B cell (primary cell): ENCODE measurements at regions of chr5 and their contacts with region 1.

Region 1: GRCh38 chr5:134041570-134042411 is 37.0 kb upstream of the VDAC1 start:
- DNase-seq: no peak
- ATAC-seq: no peak
- H3K4me3 ChIP-seq: no peak overlapping the region
- H3K4me3 Mint-ChIP-seq: no peak overlapping the region
- H3K27ac ChIP-seq: no peak overlapping the region
- H3K27ac Mint-ChIP-seq: no peak overlapping the region
- H3K4me1 ChIP-seq: peaks cover 0 to 3% of the 10 kb centered on the region in 2 donors
- H3K4me1 Mint-ChIP-seq: peaks cover 1% of the 10 kb centered on the region
- H3K27me3 ChIP-seq: no peaks in the 10 kb centered on the region
- H3K27me3 Mint-ChIP-seq: no peaks in the 10 kb centered on the region
- CTCF ChIP-seq: no peak

Region 2: DNA sequence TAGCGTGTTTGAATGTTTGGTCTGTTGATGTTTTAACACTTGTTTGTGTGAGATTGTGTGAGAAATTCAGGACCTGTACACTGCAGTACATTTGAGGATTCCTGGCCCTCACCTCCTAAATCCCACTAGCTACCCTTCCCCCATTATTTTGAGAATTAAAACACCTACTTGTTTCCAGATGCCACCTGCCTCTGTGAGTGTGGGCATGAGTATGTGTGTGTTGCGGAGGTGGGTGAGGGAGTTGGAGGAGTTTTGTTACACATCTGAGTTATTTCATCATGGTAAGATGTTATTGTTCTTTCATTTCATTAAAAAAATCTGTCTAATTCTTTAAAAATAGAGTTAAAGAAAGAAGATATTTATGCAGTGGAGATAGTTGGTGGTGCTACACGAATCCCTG is 953.7 kb before region 1 on chr5:
- CTCF ChIA-PET with region 1: no interaction called
- POLR2A ChIA-PET with region 1: no interaction called
- intact Hi-C with region 1: no loop called
- DNase-seq: no peak
- ATAC-seq: no peak
- H3K4me3 ChIP-seq: no peak overlapping the region
- H3K4me3 Mint-ChIP-seq: no peak overlapping the region
- H3K27ac ChIP-seq: no peak overlapping the region
- H3K27ac Mint-ChIP-seq: peak overlapping the region; percentile 41
- H3K4me1 ChIP-seq: no peaks in the 10 kb centered on the region
- H3K4me1 Mint-ChIP-seq: peaks cover 3% of the 10 kb centered on the region
- H3K27me3 ChIP-seq: no peaks in the 10 kb centered on the region
- H3K27me3 Mint-ChIP-seq: no peaks in the 10 kb centered on the region
- CTCF ChIP-seq: no peak

Region 3: DNA sequence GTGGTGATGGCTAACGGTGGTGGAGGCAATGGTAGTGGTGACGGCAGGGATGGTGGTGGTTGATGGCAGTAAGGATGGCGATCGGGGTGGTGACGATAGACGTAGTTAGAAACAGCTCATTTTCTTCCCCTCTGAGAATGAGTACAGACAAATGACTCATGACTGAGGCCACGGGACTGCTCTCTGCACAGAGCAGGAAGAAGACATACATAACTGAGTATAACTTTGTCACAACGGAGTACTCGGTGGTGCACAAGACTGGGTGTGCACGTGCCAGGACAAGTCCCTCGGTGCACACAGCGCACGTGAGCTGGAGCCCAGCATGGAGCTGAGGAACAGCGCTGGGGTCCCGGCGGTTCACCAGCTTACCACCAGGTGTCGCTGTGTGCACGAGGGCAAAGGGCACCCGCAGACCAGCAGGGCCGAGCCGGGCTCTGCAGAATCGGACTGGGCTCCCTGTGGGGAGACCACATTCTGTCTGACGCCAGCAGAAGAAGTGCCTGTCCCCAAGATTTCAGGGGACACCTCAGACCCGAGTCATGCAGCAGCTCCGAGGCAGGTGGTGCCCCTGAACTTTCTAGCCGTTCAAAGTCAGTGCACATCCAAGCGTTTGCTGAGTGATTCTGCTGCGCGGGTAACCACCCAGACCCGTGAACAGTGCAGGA is 618.0 kb before region 1 on chr5:
- CTCF ChIA-PET with region 1: interaction called, 11 read pairs
- POLR2A ChIA-PET with region 1: no interaction called
- intact Hi-C with region 1: no loop called
- DNase-seq: peak; percentile 80
- ATAC-seq: peak; percentile 79
- H3K4me3 ChIP-seq: no peak overlapping the region
- H3K4me3 Mint-ChIP-seq: no peak overlapping the region
- H3K27ac ChIP-seq: no peak overlapping the region
- H3K27ac Mint-ChIP-seq: no peak overlapping the region
- H3K4me1 ChIP-seq: peaks cover 0 to 13% of the 10 kb centered on the region in 2 donors
- H3K4me1 Mint-ChIP-seq: peaks cover 7% of the 10 kb centered on the region
- H3K27me3 ChIP-seq: no peaks in the 10 kb centered on the region
- H3K27me3 Mint-ChIP-seq: peaks cover 28% of the 10 kb centered on the region
- CTCF ChIP-seq: peak; percentile 98

Region 4: DNA sequence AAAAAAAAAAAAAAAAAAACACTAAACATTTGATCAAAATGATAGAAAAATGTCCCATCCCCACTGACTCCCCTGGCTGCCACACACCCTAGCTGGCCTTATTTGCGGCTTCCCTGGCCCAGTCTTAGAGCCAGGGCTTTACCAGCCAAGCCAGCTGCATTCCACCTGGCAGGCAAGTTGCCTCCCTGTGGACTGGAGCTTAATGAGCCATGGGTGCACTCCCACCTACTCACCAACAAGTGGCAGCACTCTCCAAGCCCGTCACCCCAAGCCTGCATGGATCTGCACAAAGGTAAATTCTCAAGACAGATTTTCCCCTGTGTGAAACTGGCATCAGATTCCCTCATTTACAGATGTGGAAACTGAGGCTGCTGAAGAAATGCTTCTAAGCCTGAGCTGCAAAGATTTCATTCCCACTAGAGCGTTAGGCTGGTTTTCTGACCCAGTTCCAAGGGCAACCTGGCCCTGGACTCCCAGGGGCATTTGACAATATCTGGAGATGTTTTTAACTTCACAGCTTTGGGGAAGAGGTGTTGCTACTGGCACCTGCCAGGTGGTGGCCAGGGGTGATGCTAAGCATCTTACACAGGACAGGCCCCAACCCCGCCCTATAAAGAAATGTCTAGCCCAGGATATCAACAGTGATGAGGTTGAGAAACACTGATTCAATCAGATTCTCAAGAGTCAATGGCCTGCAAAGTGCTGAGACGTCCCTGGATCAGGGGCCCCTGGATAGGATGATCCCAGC is 15.1 kb before region 1 on chr5:
- CTCF ChIA-PET with region 1: interaction called, 18 read pairs
- POLR2A ChIA-PET with region 1: no interaction called
- intact Hi-C with region 1: no loop called
- DNase-seq: peak; percentile 45
- ATAC-seq: peak; percentile 75
- H3K4me3 ChIP-seq: no peak overlapping the region
- H3K4me3 Mint-ChIP-seq: no peak overlapping the region
- H3K27ac ChIP-seq: no peak overlapping the region
- H3K27ac Mint-ChIP-seq: no peak overlapping the region
- H3K4me1 ChIP-seq: peaks cover 6 to 8% of the 10 kb centered on the region in 2 donors
- H3K4me1 Mint-ChIP-seq: peaks cover 12% of the 10 kb centered on the region
- H3K27me3 ChIP-seq: no peaks in the 10 kb centered on the region
- H3K27me3 Mint-ChIP-seq: peaks cover 3% of the 10 kb centered on the region
- CTCF ChIP-seq: peak; percentile 47

Region 5: DNA sequence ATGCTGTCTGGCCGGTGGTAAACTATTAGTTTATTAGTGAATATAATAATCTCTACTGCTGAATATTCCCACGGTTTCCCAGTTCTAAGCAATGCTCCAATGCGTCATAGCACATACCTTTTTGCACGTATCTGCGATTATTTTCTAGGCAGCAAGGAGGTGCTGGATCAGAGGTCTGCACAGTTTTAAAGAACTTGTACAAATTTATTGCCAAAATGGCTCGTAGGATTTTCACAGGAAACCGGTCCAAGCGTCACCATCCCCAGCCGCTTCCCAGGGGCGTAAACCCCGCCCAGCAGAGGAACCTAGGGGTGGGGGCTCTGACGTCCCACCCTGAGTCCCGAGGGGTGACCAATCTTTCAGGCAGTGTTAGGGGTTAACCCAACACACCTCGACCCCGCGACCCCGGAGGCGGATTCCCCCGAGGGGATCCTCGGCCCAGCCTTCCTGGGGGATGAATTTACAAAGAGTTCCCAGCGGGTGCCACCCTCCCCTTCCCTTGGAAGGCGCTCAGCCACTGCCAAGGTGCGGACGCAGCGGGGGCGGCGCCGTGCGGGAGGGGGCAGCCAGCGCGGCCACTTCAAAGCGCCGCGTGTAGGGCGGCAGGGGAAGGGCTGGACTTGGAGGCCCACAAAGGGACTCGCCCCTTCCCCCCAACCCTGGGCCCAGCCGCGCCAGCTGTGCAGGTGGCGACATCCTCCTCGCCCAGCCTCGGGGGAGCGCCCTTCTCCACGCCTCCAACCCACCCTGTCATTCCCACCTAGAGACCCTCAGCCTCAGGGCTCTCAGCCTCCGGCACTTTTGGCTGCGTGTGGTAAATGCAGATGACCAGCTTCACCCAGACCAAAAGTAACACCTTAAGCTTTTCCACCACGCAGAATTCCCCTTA is 29.2 kb after region 1 on chr5:
- CTCF ChIA-PET with region 1: interaction called, 12 read pairs
- POLR2A ChIA-PET with region 1: no interaction called
- intact Hi-C with region 1: no loop called
- DNase-seq: peak; percentile 36
- ATAC-seq: peak; percentile 33
- H3K4me3 ChIP-seq: peak overlapping the region in 4 of 5 experiments; percentile 26 to 56 (median 38)
- H3K4me3 Mint-ChIP-seq: peak overlapping the region; percentile 81
- H3K27ac ChIP-seq: no peak overlapping the region
- H3K27ac Mint-ChIP-seq: peak overlapping the region; percentile 60
- H3K4me1 ChIP-seq: peaks cover 12 to 13% of the 10 kb centered on the region in 2 donors
- H3K4me1 Mint-ChIP-seq: peaks cover 5% of the 10 kb centered on the region
- H3K27me3 ChIP-seq: peaks cover 0 to 31% (median 12%) of the 10 kb centered on the region in 4 experiments
- H3K27me3 Mint-ChIP-seq: peaks cover 32% of the 10 kb centered on the region
- CTCF ChIP-seq: no peak

Region 6: GRCh38 chr5:134125039-134126015 is 83.5 kb after region 1 on chr5:
- CTCF ChIA-PET with region 1: interaction called, 644 read pairs
- POLR2A ChIA-PET with region 1: no interaction called
- intact Hi-C with region 1: no loop called
- DNase-seq: no peak
- ATAC-seq: no peak
- H3K4me3 ChIP-seq: no peak overlapping the region
- H3K4me3 Mint-ChIP-seq: no peak overlapping the region
- H3K27ac ChIP-seq: peak overlapping the region; percentile 28 to 55
- H3K27ac Mint-ChIP-seq: peak overlapping the region; percentile 59
- H3K4me1 ChIP-seq: peaks cover 33 to 72% of the 10 kb centered on the region in 2 donors
- H3K4me1 Mint-ChIP-seq: peaks cover 54% of the 10 kb centered on the region
- H3K27me3 ChIP-seq: no peaks in the 10 kb centered on the region
- H3K27me3 Mint-ChIP-seq: no peaks in the 10 kb centered on the region
- CTCF ChIP-seq: no peak

Region 7: GRCh38 chr5:134161513-134162395 is 120.0 kb after region 1 on chr5:
- CTCF ChIA-PET with region 1: interaction called, 13 read pairs
- POLR2A ChIA-PET with region 1: no interaction called
- intact Hi-C with region 1: no loop called
- DNase-seq: no peak
- ATAC-seq: no peak
- H3K4me3 ChIP-seq: no peak overlapping the region
- H3K4me3 Mint-ChIP-seq: no peak overlapping the region
- H3K27ac ChIP-seq: no peak overlapping the region
- H3K27ac Mint-ChIP-seq: no peak overlapping the region
- H3K4me1 ChIP-seq: no peaks in the 10 kb centered on the region
- H3K4me1 Mint-ChIP-seq: no peaks in the 10 kb centered on the region
- H3K27me3 ChIP-seq: no peaks in the 10 kb centered on the region
- H3K27me3 Mint-ChIP-seq: no peaks in the 10 kb centered on the region
- CTCF ChIP-seq: no peak

Region 8: DNA sequence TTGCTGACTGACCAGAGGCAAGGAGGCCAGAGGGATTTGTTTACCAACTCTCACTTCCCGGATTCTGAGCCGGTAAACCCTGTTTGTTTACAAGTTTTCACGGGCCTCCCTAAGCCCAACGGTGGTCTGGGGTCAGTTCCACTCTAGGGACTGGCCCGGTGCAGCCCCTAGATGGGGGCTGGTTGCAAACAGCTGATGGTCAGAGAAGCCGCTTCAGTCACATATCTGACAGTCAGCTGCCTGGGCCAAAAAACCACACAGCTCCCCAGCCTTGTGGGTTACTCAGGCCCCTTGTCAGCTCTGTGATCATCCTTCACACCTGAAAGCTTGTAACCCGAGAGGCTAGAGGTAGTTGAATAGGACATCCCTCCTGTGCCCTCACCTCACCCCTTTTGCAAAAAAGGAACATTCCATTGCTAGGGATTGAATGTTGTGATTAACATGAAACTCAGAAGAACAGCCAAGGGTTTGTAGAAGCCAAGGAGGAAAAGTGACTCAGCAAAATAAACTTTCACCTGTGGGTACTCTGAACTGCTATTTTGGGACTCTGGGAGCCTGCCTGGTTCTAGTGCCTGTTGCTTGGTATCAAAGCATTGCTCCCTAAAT is 550.5 kb after region 1 on chr5:
- CTCF ChIA-PET with region 1: no interaction called
- POLR2A ChIA-PET with region 1: no interaction called
- intact Hi-C with region 1: no loop called
- DNase-seq: no peak
- ATAC-seq: no peak
- H3K4me3 ChIP-seq: no peak overlapping the region
- H3K4me3 Mint-ChIP-seq: no peak overlapping the region
- H3K27ac ChIP-seq: no peak overlapping the region
- H3K27ac Mint-ChIP-seq: no peak overlapping the region
- H3K4me1 ChIP-seq: no peaks in the 10 kb centered on the region
- H3K4me1 Mint-ChIP-seq: no peaks in the 10 kb centered on the region
- H3K27me3 ChIP-seq: no peaks in the 10 kb centered on the region
- H3K27me3 Mint-ChIP-seq: no peaks in the 10 kb centered on the region
- CTCF ChIP-seq: no peak